PC-3 (cell line): ENCODE measurements at regions of chr2 and their contacts with region 1.

Region 1: GRCh38 chr2:101697124-101698013 is at the start of gene MAP4K4:
- DNase-seq: peak; percentile 84
- ATAC-seq: peak; percentile 59
- H3K4me3 ChIP-seq: peak within 1 kb of the TSS; percentile 96
- H3K27ac ChIP-seq: peak within 1 kb of the TSS; percentile 64
- H3K4me1 ChIP-seq: peaks cover 17% of the 10 kb centered on the region
- H3K27me3 ChIP-seq: no peaks in the 10 kb centered on the region
- CTCF ChIP-seq: peak; percentile 27; the same call in 1 of the 2 replicates
- total RNA-seq, gene MAP4K4: 133 and 167 TPM in 2 replicates

Region 2: DNA sequence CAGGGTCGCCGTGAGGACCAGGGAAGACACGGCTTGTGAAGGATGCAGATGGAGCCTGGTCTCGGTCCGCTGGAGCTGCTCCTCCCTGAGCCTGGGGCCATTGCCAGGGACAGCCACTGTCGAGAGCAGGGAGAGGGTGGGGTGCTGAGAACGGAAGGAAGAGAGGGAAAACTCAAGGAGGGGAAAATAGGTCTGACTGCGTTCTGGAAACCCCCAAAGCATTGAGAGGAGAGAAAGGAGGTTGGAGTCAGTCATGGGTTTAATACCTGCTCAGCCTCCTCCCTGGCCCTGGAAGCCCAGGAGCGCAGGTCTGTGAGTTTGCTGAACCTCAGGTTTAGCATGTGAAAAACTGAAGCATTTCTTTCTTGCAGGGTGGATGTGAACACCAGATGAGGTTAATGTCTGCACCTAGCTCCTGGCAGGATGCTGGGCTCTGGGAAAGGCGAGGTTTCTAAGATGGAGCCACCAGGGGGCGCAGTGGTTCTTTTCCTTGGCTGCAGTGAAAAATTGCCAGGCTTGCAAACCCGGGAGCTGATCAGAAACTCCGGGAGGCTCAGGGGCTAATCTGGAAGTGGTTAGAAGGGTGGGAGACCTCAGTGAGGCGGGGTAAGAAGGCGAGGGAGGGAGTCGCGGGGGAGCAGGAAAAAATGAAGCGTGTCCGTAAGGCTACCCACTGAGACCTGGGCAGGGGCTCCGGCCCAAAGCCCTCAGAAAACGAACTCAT is 355.3 kb before region 1 on chr2:
- CTCF ChIA-PET with region 1: interaction called, 6 read pairs
- POLR2A ChIA-PET with region 1: no interaction called
- intact Hi-C with region 1: loop called (anchors 5 kb)
- DNase-seq: peak; percentile 90
- ATAC-seq: peak; percentile 87
- H3K4me3 ChIP-seq: no peak overlapping the region; the same call in 1 of the 2 replicates
- H3K27ac ChIP-seq: peak overlapping the region; percentile 35
- H3K4me1 ChIP-seq: peaks cover 42% of the 10 kb centered on the region
- H3K27me3 ChIP-seq: no peaks in the 10 kb centered on the region
- CTCF ChIP-seq: peak; percentile 92

Region 3: GRCh38 chr2:101419096-101419663 is 278.2 kb before region 1 on chr2:
- CTCF ChIA-PET with region 1: no interaction called
- POLR2A ChIA-PET with region 1: no interaction called
- intact Hi-C with region 1: loop called (anchors 1 kb)
- DNase-seq: peak; percentile 89
- ATAC-seq: peak; percentile 86
- H3K4me3 ChIP-seq: peak overlapping the region; percentile 48
- H3K27ac ChIP-seq: peak overlapping the region; percentile 85
- H3K4me1 ChIP-seq: peaks cover 14% of the 10 kb centered on the region
- H3K27me3 ChIP-seq: no peaks in the 10 kb centered on the region
- CTCF ChIP-seq: peak; percentile 87

Region 4: DNA sequence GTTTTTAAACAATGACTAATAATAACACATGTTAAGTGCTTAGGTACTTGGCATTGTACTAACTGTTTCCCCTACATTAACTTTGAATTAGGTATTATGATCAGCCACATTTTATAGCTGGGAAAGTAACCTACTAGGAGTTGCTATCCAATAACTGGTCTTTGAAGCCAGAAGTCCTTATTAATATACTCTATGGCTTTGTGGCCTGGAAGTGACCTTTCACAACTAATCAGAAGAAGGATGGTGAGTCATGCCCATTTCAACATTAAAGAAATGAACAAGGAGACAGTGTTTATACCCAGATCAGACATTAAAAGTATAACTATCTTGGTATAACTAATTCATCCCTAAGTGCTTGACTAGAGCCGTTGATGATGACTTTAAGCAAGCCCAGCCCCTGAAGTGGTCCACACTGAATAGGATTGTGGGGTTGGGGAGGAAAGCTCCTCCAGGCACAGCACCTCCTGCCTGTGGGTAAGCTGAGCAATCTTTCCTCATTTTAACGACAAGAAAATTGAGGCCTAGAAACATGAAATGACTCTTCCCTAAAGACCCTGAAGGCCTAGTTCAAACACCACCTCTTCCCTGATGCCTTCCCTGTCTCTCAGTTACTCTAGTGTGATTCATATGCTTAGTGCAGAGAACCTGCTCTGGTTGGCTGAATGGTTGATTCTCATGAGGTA is 150.9 kb before region 1 on chr2:
- CTCF ChIA-PET with region 1: no interaction called
- POLR2A ChIA-PET with region 1: no interaction called
- intact Hi-C with region 1: no loop called
- DNase-seq: peak; percentile 18
- ATAC-seq: peak; percentile 38
- H3K4me3 ChIP-seq: no peak overlapping the region
- H3K27ac ChIP-seq: no peak overlapping the region
- H3K4me1 ChIP-seq: peaks cover 8% of the 10 kb centered on the region
- H3K27me3 ChIP-seq: no peaks in the 10 kb centered on the region
- CTCF ChIP-seq: no peak

Region 5: GRCh38 chr2:101717071-101717845 is 19.9 kb after region 1 on chr2:
- CTCF ChIA-PET with region 1: no interaction called
- POLR2A ChIA-PET with region 1: interaction called, 10 read pairs
- intact Hi-C with region 1: no loop called
- DNase-seq: no peak
- ATAC-seq: no peak
- H3K4me3 ChIP-seq: no peak overlapping the region
- H3K27ac ChIP-seq: no peak overlapping the region
- H3K4me1 ChIP-seq: peaks cover 23% of the 10 kb centered on the region
- H3K27me3 ChIP-seq: no peaks in the 10 kb centered on the region
- CTCF ChIP-seq: no peak

Region 6: DNA sequence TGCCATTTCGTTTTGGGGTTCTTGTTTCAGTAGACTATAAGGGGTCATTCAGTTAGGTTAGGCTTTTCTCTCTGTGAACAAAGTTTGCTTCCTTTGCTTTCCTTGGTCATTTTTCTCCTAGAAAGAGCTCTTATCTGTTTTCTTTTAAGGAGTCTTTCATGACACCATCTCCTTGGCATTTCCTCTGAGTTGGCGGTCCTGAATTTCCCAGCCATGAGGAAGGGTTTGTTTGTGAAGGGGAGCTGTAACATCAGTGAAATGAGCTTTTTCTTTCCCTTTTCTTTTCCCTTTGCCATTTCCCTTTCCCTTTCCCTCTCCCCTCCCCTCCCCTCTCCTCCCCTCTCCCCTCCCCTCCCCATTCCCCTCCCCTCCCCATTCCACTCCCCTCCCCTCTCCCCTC is 61.8 kb after region 1 on chr2:
- CTCF ChIA-PET with region 1: interaction called, 3 read pairs
- POLR2A ChIA-PET with region 1: interaction called, 18 read pairs
- intact Hi-C with region 1: no loop called
- DNase-seq: peak; percentile 92
- ATAC-seq: peak; percentile 65
- H3K4me3 ChIP-seq: 0 out of 2 replicates have a peak overlapping the region, but pooled peaks have one; percentile 5
- H3K27ac ChIP-seq: peak overlapping the region; percentile 66
- H3K4me1 ChIP-seq: peaks cover 57% of the 10 kb centered on the region
- H3K27me3 ChIP-seq: no peaks in the 10 kb centered on the region
- CTCF ChIP-seq: no peak

Region 7: GRCh38 chr2:101776172-101777043 is 79.0 kb after region 1 on chr2:
- CTCF ChIA-PET with region 1: no interaction called
- POLR2A ChIA-PET with region 1: no interaction called
- intact Hi-C with region 1: no loop called
- DNase-seq: no peak
- ATAC-seq: no peak
- H3K4me3 ChIP-seq: no peak overlapping the region
- H3K27ac ChIP-seq: no peak overlapping the region
- H3K4me1 ChIP-seq: peaks cover 4% of the 10 kb centered on the region; the same call in 1 of the 2 replicates
- H3K27me3 ChIP-seq: no peaks in the 10 kb centered on the region
- CTCF ChIP-seq: no peak